HEK293 (cell line): ENCODE measurements at regions of chr1 and their contacts with region 1.

Region 1: DNA sequence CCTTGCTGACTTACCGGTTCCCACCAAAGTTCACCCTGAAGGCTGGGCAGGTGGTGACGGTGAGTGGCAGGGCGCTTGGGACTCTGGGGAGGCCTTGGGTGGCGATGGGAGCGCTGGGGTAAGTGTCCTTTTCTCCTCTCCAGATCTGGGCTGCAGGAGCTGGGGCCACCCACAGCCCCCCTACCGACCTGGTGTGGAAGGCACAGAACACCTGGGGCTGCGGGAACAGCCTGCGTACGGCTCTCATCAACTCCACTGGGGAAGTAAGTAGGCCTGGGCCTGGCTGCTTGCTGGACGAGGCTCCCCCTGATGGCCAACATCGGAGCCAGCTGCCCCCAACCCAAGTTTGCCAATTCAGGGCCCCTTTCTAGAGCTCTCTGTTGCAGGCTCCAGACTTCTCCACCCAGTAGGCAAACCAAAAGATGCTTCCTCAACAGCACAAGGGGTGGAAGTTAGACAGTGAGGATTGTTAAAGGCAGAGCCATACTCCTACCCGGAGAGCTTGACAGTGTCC is 16.4 kb upstream of the SEMA4A start:
- H3K4me3 ChIP-seq: no peak overlapping the region
- H3K27ac ChIP-seq: no peak overlapping the region
- H3K4me1 ChIP-seq: no peaks in the 10 kb centered on the region
- CTCF ChIP-seq: peak; percentile 23; the same call in 1 of the 2 replicates

Region 2: GRCh38 chr1:155744711-155745283 is 392.2 kb before region 1 on chr1:
- CTCF ChIA-PET with region 1: no interaction called
- POLR2A ChIA-PET with region 1: no interaction called
- H3K4me3 ChIP-seq: peak overlapping the region; percentile 52
- H3K27ac ChIP-seq: peak overlapping the region; percentile 32
- H3K4me1 ChIP-seq: no peaks in the 10 kb centered on the region
- CTCF ChIP-seq: no peak

Region 3: GRCh38 chr1:156233426-156234127 is 96.5 kb after region 1 on chr1:
- CTCF ChIA-PET with region 1: interaction called, 210 read pairs
- POLR2A ChIA-PET with region 1: no interaction called
- H3K4me3 ChIP-seq: no peak overlapping the region
- H3K27ac ChIP-seq: no peak overlapping the region
- H3K4me1 ChIP-seq: no peaks in the 10 kb centered on the region
- CTCF ChIP-seq: no peak